Naive thymus-derived CD4-positive, alpha-beta T cell (primary cell): ENCODE measurements at regions of chr10 and their contacts with region 1.

Region 1: DNA sequence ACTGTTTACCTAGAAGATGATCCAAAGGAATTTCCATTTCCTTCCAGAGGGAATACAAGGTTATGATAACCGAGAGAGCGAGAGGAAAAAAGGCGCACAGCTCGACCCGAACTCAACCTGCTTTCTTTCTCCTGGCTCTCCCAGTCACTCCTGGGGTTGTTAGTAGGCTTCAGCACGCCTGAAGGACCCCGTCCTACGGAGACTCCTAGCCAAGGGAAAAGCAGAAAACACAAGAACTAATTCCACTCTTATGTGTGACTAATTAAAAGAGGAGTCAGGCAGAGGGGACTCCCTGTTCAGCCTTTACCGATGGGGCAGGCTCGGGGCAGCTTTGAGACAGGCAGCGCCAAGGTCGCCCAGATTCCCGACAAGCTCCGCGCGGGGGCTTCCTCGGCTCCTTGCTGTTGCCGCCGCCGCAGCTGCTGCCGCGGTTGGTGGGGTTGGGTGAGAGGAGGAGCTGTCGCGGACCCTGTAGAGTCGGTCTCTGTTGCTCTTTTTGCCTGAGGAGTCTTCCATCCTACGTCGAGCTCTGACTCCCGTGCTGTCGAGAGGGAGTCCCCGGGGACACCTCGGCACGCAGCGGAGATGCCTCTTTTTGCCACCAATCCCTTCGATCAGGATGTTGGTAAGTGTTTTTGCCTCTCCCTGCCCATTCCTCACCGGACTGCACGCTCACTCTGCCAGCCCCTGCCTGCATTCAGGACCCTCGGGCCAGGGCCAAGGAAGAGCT is at the start of gene STAM:
- DNase-seq: peak; percentile 88 to 99 (median 94)
- ATAC-seq: peak; percentile 95
- H3K4me3 ChIP-seq: peak within 1 kb of the TSS; percentile 92
- H3K4me3 Mint-ChIP-seq: peak within 1 kb of the TSS; percentile 95 to 99 (median 98)
- H3K27ac ChIP-seq: peak within 1 kb of the TSS; percentile 96
- H3K27ac Mint-ChIP-seq: peak within 1 kb of the TSS; percentile 100
- H3K4me1 ChIP-seq: peaks cover 17 to 35% of the 10 kb centered on the region in 2 donors
- H3K4me1 Mint-ChIP-seq: peaks cover 33 to 71% (median 57%) of the 10 kb centered on the region in 7 donors
- H3K27me3 ChIP-seq: no peaks in the 10 kb centered on the region
- H3K27me3 Mint-ChIP-seq: peaks cover 0 to 3% (median 0%) of the 10 kb centered on the region in 5 donors
- total RNA-seq, gene STAM: 18.3 to 25.4 (median 19.6) TPM

Region 2: GRCh38 chr10:15859906-15860691 is 1783.8 kb before region 1 on chr10 and contains the start of gene MINDY3:
- CTCF ChIA-PET with region 1: no interaction called
- POLR2A ChIA-PET with region 1: no interaction called
- intact Hi-C with region 1: loop called (anchors 1 to 10 kb)
- DNase-seq: peak; percentile 54 to 86 (median 82)
- ATAC-seq: peak; percentile 94
- H3K4me3 ChIP-seq: peak within 1 kb of the TSS; percentile 97
- H3K4me3 Mint-ChIP-seq: peak within 1 kb of the TSS; percentile 95 to 100 (median 98)
- H3K27ac ChIP-seq: peak within 1 kb of the TSS; percentile 55
- H3K27ac Mint-ChIP-seq: peak within 1 kb of the TSS; percentile 90 to 96 (median 93)
- H3K4me1 ChIP-seq: peaks cover 10 to 22% of the 10 kb centered on the region in 2 donors
- H3K4me1 Mint-ChIP-seq: peaks cover 25 to 53% (median 45%) of the 10 kb centered on the region in 7 donors
- H3K27me3 ChIP-seq: no peaks in the 10 kb centered on the region
- H3K27me3 Mint-ChIP-seq: peaks cover 19 to 24% (median 22%) of the 10 kb centered on the region in 5 donors
- total RNA-seq, gene MINDY3: 21.4 to 43.8 (median 37.4) TPM

Region 3: DNA sequence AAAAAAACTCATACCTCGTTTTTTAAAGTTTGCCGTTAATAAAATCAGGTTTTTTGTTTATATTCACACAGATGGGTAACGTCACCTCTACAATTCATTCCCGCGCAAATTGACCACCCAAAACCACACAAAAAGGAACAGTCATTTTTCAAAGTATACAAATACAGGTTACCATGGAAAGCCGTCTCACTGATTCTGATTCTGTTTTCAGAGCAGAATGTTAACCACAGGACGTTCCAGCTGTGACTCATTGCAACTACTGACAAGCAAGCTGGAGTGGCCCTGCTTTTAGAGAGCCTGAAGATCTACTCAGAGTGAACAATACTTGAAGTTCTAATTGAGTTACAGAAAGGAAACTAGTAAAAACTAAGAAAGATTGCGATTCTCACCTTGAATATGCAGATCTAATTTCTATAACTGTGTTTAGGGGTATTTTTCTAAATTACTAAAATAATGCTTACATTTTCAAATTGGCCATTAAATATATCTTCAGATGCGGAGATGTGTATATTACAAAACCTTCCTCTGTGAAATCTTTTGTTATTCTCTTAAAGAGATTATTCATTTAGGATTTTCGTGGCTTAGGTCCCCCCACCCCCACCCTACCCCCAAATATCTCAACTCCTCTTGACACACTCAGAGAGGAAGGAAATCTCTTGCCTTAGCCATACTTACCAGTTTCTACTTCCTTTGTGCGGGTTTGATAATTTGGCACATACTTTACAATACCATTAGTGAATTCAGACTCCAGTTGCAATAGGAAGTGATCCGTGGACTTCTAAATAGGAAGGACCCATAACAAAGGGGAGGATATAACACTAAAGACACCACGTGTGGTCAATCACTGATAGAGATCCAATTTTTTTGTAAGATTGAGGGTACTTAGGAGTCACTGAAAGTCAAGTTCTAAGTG is 620.3 kb before region 1 on chr10:
- CTCF ChIA-PET with region 1: no interaction called
- POLR2A ChIA-PET with region 1: no interaction called
- intact Hi-C with region 1: loop called (anchors 5 to 10 kb)
- DNase-seq: peak in 8 of 9 donors; percentile 60 to 89 (median 78)
- ATAC-seq: peak; percentile 86
- H3K4me3 ChIP-seq: no peak overlapping the region
- H3K4me3 Mint-ChIP-seq: peak overlapping the region; percentile 5 to 89 (median 64)
- H3K27ac ChIP-seq: peak overlapping the region; percentile 82
- H3K27ac Mint-ChIP-seq: peak overlapping the region; percentile 74 to 99 (median 91)
- H3K4me1 ChIP-seq: peaks cover 46 to 59% of the 10 kb centered on the region in 2 donors
- H3K4me1 Mint-ChIP-seq: peaks cover 32 to 72% (median 67%) of the 10 kb centered on the region in 7 donors
- H3K27me3 ChIP-seq: no peaks in the 10 kb centered on the region
- H3K27me3 Mint-ChIP-seq: peaks cover 0 to 9% (median 0%) of the 10 kb centered on the region in 5 donors

Region 4: DNA sequence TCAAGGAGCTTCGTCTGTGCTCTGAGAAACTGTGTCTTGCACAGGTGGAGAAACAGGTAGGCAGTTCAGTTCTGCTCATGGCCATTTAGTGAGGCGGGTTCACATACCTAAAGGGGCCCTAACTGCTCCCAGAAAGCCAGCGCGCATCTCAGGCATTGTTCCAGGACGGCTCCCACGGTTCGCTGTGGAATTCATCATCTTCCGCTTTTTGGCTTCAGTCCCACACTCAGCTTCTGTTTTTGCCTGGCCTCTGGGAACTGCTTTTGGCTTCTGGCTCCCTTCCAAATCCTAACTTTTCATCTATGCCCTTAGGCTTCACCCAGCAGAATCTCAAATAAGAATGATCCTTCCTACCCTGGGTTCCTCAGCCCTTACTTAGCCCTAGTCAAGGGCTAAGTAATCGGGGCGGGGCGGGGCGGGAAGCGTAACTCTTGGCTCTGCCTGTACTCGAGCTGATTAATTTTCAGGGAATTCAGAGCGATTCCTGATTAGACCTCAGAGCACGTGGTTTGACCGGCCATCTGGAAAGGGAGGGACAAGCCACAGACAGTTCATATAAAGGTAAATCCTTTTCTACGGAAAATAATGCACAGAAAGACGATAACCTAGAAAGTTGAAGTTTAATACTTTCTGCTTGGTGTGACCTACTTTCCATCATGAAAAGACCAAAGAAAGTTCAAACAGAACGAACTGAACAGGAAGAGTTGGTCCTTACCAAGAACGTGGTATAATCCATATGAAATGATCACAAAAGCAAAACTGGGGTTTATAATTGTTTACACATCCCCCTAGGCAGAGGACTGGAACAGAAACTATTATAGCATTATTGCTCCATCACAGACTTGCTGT is 295.2 kb before region 1 on chr10:
- CTCF ChIA-PET with region 1: no interaction called
- POLR2A ChIA-PET with region 1: no interaction called
- intact Hi-C with region 1: no loop called
- DNase-seq: no peak
- ATAC-seq: no peak
- H3K4me3 ChIP-seq: no peak overlapping the region
- H3K4me3 Mint-ChIP-seq: no peak overlapping the region
- H3K27ac ChIP-seq: no peak overlapping the region
- H3K27ac Mint-ChIP-seq: no peak overlapping the region
- H3K4me1 ChIP-seq: no peaks in the 10 kb centered on the region
- H3K4me1 Mint-ChIP-seq: no peaks in the 10 kb centered on the region
- H3K27me3 ChIP-seq: no peaks in the 10 kb centered on the region
- H3K27me3 Mint-ChIP-seq: peaks cover 0 to 11% (median 3%) of the 10 kb centered on the region in 5 donors

Region 5: DNA sequence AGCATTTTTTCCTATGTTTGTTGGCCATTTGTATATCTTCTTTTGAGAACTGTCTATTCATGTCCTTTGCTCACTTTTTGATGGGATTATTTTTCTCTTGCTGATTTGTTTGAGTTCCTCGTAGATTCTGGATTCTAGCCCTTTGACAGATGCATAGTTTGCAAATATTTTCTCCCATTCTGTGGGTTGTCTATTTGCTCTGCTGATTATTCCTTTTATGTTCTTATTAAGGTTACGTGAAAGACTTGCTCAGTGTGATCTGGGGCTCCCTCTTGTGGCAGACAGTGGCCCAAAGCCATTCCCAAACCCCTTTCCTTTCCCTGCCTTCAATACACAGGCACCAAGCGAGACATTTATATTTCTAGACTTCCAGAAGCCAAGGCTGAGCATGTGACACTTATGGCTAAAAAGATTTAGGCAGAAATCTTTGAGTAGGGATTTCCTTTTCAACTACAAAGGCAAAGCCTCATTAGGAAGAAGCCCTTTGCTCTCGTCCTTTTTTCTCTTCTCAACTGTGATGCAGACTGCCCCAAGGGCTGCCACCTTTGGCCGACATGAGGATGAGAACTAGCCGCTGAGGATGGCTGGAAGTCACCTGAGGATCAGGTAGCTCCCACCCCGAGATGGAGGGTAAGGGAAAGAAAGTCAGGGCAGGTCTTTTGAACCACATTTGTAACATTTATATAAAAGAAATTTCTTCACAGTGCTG is 213.1 kb before region 1 on chr10:
- CTCF ChIA-PET with region 1: no interaction called
- POLR2A ChIA-PET with region 1: interaction called, 10 read pairs
- intact Hi-C with region 1: loop called (anchors 2 to 5 kb)
- DNase-seq: peak in 8 of 9 donors; percentile 44 to 68 (median 60)
- ATAC-seq: peak; percentile 43
- H3K4me3 ChIP-seq: no peak overlapping the region
- H3K4me3 Mint-ChIP-seq: peak overlapping the region in 9 of 10 donors; percentile 11 to 81 (median 42)
- H3K27ac ChIP-seq: no peak overlapping the region
- H3K27ac Mint-ChIP-seq: peak overlapping the region in 8 of 9 donors; percentile 20 to 97 (median 90)
- H3K4me1 ChIP-seq: peaks cover 37 to 43% of the 10 kb centered on the region in 2 donors
- H3K4me1 Mint-ChIP-seq: peaks cover 43 to 58% (median 53%) of the 10 kb centered on the region in 7 donors
- H3K27me3 ChIP-seq: no peaks in the 10 kb centered on the region
- H3K27me3 Mint-ChIP-seq: peaks cover 0 to 24% (median 0%) of the 10 kb centered on the region in 5 donors

Region 6: DNA sequence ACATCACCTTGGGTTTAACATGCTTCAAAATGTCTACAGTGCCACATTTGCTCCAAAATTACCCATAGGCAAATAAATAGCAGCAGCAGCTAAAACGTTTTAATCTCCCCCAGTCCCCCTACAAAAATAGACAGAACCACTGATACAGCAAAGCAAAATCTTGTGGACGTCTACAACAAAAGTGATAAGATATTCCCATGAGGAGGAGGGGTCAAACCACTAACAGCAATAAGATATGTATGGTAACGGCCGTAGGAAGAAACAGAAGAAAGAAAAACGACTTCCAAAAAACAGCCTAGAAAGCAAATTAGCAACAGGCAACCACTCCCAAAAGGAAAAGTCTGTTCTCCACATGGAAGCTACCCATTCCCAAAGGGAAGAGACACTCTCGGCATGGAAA is 155.1 kb before region 1 on chr10:
- CTCF ChIA-PET with region 1: no interaction called
- POLR2A ChIA-PET with region 1: no interaction called
- intact Hi-C with region 1: no loop called
- DNase-seq: no peak
- ATAC-seq: no peak
- H3K4me3 ChIP-seq: no peak overlapping the region
- H3K4me3 Mint-ChIP-seq: no peak overlapping the region
- H3K27ac ChIP-seq: no peak overlapping the region
- H3K27ac Mint-ChIP-seq: no peak overlapping the region
- H3K4me1 ChIP-seq: no peaks in the 10 kb centered on the region
- H3K4me1 Mint-ChIP-seq: no peaks in the 10 kb centered on the region
- H3K27me3 ChIP-seq: no peaks in the 10 kb centered on the region
- H3K27me3 Mint-ChIP-seq: peaks cover 0 to 4% (median 0%) of the 10 kb centered on the region in 5 donors

Region 7: GRCh38 chr10:17617031-17617911 is 26.6 kb before region 1 on chr10 and contains the start of gene HACD1:
- CTCF ChIA-PET with region 1: interaction called, 3 read pairs
- POLR2A ChIA-PET with region 1: interaction called, 4 read pairs
- intact Hi-C with region 1: loop called (anchors 1 kb)
- DNase-seq: peak; percentile 15 to 63 (median 33)
- ATAC-seq: peak; percentile 74
- H3K4me3 ChIP-seq: peak within 1 kb of the TSS; percentile 80
- H3K4me3 Mint-ChIP-seq: peak within 1 kb of the TSS; percentile 86 to 93 (median 90)
- H3K27ac ChIP-seq: no peak within 1 kb of the TSS
- H3K27ac Mint-ChIP-seq: peak within 1 kb of the TSS in 3 of 9 donors; percentile 29 to 68 (median 52)
- H3K4me1 ChIP-seq: peaks cover 0 to 3% of the 10 kb centered on the region in 2 donors
- H3K4me1 Mint-ChIP-seq: peaks cover 0 to 16% (median 6%) of the 10 kb centered on the region in 7 donors
- H3K27me3 ChIP-seq: no peaks in the 10 kb centered on the region
- H3K27me3 Mint-ChIP-seq: peaks cover 13 to 39% (median 21%) of the 10 kb centered on the region in 5 donors
- total RNA-seq, gene HACD1: 0.24 to 1.6 (median 0.80) TPM in 3 of 5 experiments, not detected in the others

Region 8: DNA sequence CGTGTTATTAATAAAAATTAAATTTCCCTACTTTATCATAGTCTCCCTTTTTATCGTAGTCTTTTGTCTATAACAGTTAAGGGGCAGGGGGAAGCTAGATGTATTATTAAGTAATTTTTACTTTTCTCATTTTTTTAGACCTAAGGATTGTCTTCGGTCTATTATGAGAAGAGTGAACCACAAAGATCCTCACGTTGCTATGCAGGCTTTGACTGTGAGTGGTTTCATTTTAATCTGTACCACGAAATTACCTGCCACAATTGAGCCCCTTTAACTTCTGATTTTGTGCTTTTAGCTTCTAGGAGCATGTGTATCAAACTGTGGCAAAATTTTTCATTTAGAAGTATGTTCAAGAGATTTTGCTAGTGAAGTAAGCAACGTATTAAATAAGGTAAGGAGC is 40.6 kb after region 1 on chr10:
- CTCF ChIA-PET with region 1: no interaction called
- POLR2A ChIA-PET with region 1: interaction called, 3 read pairs
- intact Hi-C with region 1: loop called (anchors 5 kb)
- DNase-seq: no peak
- ATAC-seq: no peak
- H3K4me3 ChIP-seq: no peak overlapping the region
- H3K4me3 Mint-ChIP-seq: no peak overlapping the region
- H3K27ac ChIP-seq: no peak overlapping the region
- H3K27ac Mint-ChIP-seq: no peak overlapping the region
- H3K4me1 ChIP-seq: no peaks in the 10 kb centered on the region
- H3K4me1 Mint-ChIP-seq: peaks cover 28 to 47% (median 42%) of the 10 kb centered on the region in 7 donors
- H3K27me3 ChIP-seq: no peaks in the 10 kb centered on the region
- H3K27me3 Mint-ChIP-seq: no peaks in the 10 kb centered on the region

Region 9: DNA sequence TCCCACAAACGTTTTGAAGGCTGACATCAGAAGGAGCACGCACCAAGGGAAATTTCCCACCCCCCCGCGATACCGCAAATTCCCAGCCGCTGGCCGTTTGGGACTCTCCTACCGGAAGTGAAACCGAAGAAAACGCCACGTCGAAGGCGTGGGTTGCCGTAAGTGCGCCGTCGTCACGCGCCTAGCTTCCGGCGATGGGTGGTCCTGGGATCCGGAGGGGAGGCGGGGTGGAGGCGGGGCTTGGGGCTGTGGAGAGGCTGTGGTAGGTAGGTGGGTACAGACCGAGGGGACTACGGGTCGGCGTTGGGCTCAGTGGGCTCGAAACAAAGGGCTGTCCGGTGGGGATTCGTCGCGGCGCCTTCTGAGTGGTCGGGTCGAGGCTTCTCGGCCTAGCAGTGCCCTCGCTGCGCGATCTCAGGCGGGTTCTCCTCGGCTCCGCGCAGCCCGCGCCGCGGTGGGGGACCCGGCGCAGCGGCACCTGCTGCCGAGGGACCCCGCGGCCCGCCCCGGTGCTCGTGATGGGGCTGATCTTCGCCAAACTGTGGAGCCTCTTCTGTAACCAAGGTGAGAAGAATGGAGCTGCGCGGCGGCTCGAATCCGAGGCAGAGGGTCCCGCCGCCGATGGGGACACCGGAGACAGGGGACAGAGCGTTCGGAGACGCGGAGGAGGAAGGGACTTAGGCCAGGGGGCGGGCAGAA is 1015.3 kb after region 1 on chr10 and contains the start of gene ARL5B:
- CTCF ChIA-PET with region 1: no interaction called
- POLR2A ChIA-PET with region 1: no interaction called
- intact Hi-C with region 1: loop called (anchors 1 to 2 kb)
- DNase-seq: peak; percentile 82 to 97 (median 93)
- ATAC-seq: peak; percentile 98
- H3K4me3 ChIP-seq: peak within 1 kb of the TSS; percentile 89
- H3K4me3 Mint-ChIP-seq: peak within 1 kb of the TSS; percentile 94 to 100 (median 99)
- H3K27ac ChIP-seq: peak within 1 kb of the TSS; percentile 92
- H3K27ac Mint-ChIP-seq: peak within 1 kb of the TSS; percentile 95 to 99 (median 99)
- H3K4me1 ChIP-seq: peaks cover 16 to 21% of the 10 kb centered on the region in 2 donors
- H3K4me1 Mint-ChIP-seq: peaks cover 28 to 56% (median 44%) of the 10 kb centered on the region in 7 donors
- H3K27me3 ChIP-seq: no peaks in the 10 kb centered on the region
- H3K27me3 Mint-ChIP-seq: no peaks in the 10 kb centered on the region
- total RNA-seq, gene ARL5B: 9.7 to 15.8 (median 13.9) TPM